BJ (cell line): ENCODE measurements at regions of chr21 and their contacts with region 1.

Region 1: DNA sequence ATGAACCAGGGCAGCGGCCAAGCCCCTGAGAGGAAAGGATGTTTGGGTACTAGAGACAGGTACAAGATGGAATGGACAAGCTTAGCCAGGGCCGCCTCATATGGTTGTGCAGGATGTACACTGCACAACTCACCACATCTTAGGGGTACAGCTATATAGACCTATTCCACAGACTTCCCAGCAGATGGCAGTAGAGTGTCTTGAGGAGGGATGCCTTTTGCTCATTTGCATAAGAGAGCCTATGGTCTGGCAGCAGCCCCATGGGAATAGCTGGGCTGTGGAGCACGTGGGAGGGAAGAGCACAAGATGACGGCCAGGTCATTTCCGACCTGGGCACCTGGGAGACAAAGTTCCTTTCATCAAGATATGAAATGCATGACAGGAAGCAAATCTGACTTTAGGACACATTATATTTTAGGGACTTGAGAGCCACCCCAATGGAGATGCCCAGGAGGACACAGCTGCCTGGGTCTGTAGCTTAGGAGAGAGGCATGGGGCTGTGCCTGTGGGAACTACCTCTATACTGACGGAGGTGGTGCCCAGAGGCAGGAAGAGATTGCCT is 215.5 kb downstream of the KCNJ6 start:
- DNase-seq: no peak
- H3K4me3 ChIP-seq: no peak overlapping the region
- H3K27me3 ChIP-seq: peaks cover 7% of the 10 kb centered on the region
- CTCF ChIP-seq: peak; percentile 82

Region 2: DNA sequence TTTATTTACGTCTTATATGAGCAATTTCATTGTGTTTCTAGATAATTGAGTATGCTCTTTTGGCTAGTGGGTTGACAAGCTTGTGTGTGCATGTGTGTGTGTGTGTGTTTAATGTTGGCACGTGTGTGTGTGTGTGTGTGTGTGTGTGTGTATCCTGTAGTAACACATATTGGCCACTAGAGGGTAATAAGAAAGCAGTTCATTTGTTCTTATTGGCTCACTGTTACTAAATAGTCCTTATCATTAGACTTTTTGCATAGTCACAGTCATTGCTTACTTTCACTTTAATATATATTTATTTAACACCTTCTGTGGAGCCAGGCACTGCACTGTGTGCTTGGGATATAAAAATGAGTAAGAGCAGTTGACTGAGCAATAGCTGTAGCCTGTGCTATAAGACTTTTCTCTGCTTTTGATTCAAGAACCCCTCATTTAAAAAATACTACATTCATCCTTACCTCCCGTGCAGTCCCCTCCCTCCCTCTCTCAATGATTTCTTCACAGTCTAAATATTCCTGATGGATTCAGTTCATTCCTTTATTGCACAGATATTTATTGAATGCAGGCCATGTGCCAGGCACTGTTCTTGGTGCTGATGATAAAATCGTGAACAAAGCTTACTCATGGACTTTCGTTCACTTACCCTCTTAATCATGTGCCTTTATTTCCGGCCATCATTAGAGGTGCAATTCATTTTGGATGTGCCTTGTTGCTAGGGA is 237.5 kb before region 1 on chr21:
- CTCF ChIA-PET with region 1: no interaction called
- POLR2A ChIA-PET with region 1: no interaction called
- DNase-seq: no peak
- H3K4me3 ChIP-seq: peak overlapping the region; percentile 2; the same call in 1 of the 2 replicates
- H3K27me3 ChIP-seq: no peaks in the 10 kb centered on the region
- CTCF ChIP-seq: peak; percentile 66

Region 3: DNA sequence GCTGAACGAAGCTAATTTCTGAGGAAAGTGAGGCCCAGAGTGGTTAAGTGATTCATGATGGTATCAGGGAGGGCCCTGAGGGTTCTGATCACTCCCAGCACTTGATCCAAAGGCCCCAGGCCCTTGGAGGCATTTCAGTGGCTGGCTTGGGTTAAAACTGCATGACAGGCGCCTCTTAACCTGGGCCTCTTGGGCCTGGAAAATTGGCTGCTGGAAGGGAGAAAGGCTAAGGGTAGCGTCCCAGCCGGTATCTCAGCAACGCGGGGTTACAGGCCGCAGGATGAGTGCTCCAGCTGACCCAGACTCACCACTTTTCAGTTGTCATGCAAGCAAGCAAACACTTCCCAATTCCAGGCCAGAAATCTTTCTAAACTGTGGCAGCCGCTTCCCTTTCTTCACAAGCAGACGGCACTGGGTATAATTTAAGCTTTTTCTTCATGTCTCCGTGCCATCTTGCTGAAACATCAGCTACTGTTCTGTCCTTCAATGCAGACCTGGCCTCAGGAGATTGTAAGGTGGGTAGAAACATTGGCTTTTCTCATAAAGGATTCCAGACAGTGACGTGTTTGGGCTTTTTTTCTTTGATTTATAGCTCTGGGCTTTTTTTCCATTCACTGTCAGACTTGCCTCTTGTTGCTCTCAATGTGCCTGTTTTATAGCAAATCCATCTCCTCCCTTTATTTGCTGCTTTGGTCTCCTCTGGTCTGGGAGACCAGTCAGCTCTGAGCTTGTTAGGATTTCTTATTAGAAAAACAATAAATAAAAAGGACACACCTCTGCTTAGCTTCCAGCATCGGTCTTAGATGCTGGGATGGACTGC is 13.5 kb before region 1 on chr21:
- CTCF ChIA-PET with region 1: interaction called, 14 read pairs
- POLR2A ChIA-PET with region 1: no interaction called
- DNase-seq: no peak
- H3K4me3 ChIP-seq: no peak overlapping the region
- H3K27me3 ChIP-seq: peaks cover 6% of the 10 kb centered on the region
- CTCF ChIP-seq: no peak